ENCODE measurements at regions of chr2 and their contacts with region 1.

Region 1: GRCh38 chr2:47437287-47437686 is 34.3 kb downstream of the MSH2 start:
- DNase-seq: no peak
- H3K4me3 ChIP-seq: no peak overlapping the region
- CTCF ChIP-seq: peak; percentile 11

Region 2: GRCh38 chr2:47422560-47422959 is 14.7 kb before region 1 on chr2:
- CTCF ChIA-PET with region 1: interaction called, 17 read pairs
- POLR2A ChIA-PET with region 1: no interaction called
- DNase-seq: no peak
- H3K4me3 ChIP-seq: no peak overlapping the region
- CTCF ChIP-seq: no peak

Region 3: DNA sequence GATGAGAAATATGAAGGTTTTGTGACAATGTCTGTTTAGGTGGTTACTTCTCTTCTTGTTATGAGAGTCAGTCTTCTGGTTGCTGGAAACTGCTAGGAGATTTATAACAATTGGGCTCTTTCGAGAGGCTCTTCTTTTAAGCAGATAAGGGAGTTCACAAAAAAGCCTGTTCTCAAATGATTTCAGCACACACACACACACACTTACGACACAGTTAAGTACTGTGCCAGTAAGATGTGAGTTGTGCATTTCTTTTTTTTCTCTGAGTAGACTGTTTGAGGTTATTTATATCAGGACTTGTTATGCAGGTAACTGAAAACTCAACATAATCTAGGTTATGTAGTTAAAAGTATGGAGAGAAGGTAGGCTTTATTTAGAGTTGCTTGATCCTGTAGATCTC is 15.5 kb after region 1 on chr2:
- CTCF ChIA-PET with region 1: interaction called, 10 read pairs
- POLR2A ChIA-PET with region 1: no interaction called
- DNase-seq: no peak
- H3K4me3 ChIP-seq: no peak overlapping the region
- CTCF ChIP-seq: no peak

Region 4: GRCh38 chr2:47782671-47783485 is 345.6 kb after region 1 on chr2 and contains the start of gene MSH6:
- CTCF ChIA-PET with region 1: interaction called, 15 read pairs
- POLR2A ChIA-PET with region 1: no interaction called
- DNase-seq: peak; percentile 10
- H3K4me3 ChIP-seq: peak within 1 kb of the TSS; percentile 93
- CTCF ChIP-seq: no peak